HEK293T (cell line): ENCODE measurements at regions of chr6 and their contacts with region 1.

Region 1: DNA sequence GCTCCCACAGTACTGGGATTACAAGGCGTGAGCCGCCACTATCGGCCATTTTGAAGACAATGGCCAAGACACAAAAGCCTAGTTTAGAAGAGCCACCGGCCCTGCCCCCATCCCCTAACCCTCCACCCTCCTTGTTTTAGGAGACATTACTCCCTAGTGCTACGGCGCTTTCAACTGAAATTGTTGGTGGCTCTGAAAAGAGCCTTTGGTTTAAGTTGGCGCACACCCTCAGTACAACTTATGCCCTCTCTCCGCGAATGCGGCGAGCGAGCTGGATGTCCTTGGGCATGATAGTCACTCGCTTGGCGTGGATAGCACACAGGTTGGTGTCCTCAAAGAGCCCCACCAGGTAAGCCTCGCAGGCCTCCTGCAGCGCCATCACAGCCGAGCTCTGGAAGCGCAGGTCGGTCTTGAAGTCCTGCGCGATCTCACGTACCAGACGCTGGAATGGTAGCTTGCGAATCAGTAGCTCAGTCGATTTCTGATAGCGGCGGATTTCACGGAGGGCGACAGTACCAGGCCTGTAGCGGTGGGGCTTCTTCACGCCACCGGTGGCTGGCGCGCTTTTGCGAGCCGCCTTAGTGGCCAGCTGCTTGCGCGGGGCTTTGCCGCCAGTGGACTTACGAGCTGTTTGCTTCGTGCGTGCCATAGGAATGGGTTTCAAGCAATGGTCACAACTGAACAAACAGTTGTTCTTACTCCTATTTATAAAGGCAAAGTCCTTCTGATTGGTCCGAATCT is 114.9 kb upstream of the BTN3A2 start:
- DNase-seq: no peak

Region 2: DNA sequence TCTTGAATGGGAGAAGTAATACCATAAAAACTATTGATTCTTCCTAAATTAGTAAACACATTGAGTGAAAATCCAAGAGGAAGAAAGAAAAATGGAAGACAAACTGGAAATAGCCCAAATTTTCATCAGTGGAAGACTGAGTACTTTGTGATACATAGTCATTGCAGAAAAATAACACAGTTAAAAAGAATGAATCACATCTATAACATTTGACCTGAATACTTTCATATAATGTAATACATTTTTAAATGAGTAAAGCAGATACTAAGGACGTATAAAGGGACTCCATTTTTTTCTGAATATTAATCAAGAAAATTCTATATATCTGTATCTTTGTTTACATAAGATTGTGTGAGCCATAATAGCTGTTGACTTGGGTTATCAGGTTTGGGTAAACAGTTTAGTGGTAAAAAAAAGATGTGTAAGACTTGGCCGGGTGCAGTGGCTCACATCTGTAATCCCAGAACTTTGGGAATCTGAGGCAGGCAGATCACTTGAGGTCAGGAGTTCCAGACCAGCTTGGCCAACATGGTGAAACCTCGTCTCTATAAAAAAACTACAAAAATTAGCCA is 315.3 kb before region 1 on chr6:
- CTCF ChIA-PET with region 1: no interaction called
- POLR2A ChIA-PET with region 1: no interaction called
- DNase-seq: no peak

Region 3: DNA sequence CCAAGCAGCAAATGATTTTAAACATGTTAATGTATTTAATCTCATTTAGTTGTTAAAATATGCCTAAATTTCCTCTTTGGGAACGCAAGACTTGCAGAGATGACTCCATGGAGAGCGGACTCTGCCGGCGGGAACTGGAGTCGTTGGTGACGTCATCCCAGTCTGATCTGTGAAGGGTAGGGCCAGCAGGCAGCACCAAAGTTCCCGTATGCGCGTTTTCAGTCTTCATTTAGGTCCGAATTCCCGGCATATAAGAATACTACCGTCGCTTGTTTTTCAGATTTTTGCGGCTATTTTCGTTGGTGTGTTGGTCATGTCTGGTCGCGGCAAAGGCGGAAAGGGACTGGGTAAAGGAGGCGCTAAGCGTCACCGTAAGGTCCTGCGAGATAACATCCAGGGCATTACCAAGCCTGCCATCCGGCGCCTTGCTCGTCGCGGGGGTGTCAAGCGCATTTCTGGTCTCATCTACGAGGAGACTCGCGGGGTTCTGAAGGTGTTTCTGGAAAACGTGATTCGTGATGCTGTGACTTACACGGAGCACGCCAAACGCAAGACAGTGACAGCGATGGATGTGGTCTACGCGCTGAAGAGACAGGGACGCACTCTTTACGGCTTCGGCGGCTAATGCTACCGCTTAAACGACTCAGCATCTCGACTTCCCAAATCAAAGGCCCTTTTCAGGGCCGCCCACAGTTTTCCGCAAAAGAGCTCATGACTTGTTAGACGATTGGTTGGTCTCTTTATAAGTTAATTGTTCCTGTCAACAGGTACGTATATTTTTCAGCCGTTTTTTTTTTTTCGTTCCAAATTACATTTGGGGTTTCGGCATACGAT is 45.6 kb before region 1 on chr6:
- CTCF ChIA-PET with region 1: interaction called, 3 read pairs
- POLR2A ChIA-PET with region 1: interaction called, 36 read pairs
- DNase-seq: peak; percentile 86

Region 4: GRCh38 chr6:26216356-26216885 is 33.7 kb before region 1 on chr6:
- CTCF ChIA-PET with region 1: interaction called, 3 read pairs
- POLR2A ChIA-PET with region 1: interaction called, 29 read pairs
- DNase-seq: no peak

Region 5: GRCh38 chr6:26223650-26224546 is 26.2 kb before region 1 on chr6:
- CTCF ChIA-PET with region 1: interaction called, 3 read pairs
- POLR2A ChIA-PET with region 1: interaction called, 21 read pairs
- DNase-seq: peak; percentile 63

Region 6: GRCh38 chr6:26234421-26235296 is 15.5 kb before region 1 on chr6:
- CTCF ChIA-PET with region 1: interaction called, 7 read pairs
- POLR2A ChIA-PET with region 1: interaction called, 48 read pairs
- DNase-seq: peak; percentile 72

Region 7: DNA sequence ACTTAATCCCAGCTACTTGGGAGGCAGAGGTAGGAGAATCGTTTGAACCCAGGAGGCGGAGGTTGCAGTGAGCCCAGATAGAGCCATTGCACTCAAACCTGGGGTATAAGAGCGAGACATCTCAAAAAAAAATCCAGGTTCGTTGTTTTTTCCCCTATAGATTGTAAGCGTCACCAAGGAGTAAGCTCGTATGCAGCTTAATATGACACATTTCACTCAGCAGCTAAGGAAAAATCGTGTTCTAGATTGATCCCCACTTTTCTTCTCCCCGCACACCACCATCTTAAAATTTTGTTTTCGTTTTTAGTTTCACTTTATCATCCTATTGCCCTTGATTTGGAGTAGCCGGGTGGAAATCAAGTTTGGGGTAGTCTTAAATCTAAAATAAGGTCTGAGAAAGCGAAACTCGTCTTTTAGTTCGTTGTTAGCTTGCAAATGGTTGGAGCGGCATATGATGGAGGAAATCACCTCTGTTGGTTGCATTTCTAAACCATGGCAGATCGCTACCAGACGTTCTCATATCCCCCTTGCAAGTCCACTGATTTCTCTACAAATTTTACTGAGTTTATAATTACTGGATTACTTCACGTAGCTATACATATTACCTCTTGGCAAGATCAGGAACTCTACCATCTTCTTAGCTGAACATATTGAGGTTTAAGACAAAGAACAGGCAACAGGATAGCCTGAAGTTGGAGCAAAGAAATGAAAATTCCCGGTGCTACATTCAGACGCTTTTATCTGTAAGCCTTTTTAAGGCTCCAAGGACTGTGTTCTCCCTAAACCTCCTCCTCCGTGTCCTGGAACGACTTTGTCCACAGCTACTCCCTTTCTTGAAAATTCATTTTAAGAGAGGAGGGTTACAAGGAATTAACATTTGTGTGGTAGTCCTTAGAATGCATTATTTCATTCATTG is 23.8 kb after region 1 on chr6:
- CTCF ChIA-PET with region 1: interaction called, 3 read pairs
- POLR2A ChIA-PET with region 1: interaction called, 12 read pairs
- DNase-seq: no peak

Region 8: GRCh38 chr6:26285143-26286134 is 35.3 kb after region 1 on chr6:
- CTCF ChIA-PET with region 1: interaction called, 4 read pairs
- POLR2A ChIA-PET with region 1: interaction called, 27 read pairs
- DNase-seq: peak; percentile 83